B cell (primary cell): ENCODE measurements at regions of chr3 and their contacts with region 1.

Region 1: GRCh38 chr3:141412087-141412935 is 44.0 kb downstream of the ZBTB38 start:
- DNase-seq: peak; percentile 78
- ATAC-seq: peak; percentile 80
- H3K4me3 ChIP-seq: peak overlapping the region in 4 of 5 experiments; percentile 7 to 59 (median 39)
- H3K4me3 Mint-ChIP-seq: peak overlapping the region; percentile 85
- H3K27ac ChIP-seq: peak overlapping the region; percentile 64 to 86
- H3K27ac Mint-ChIP-seq: peak overlapping the region; percentile 96
- H3K4me1 ChIP-seq: peaks cover 21 to 22% of the 10 kb centered on the region in 2 donors
- H3K4me1 Mint-ChIP-seq: peaks cover 42% of the 10 kb centered on the region
- H3K27me3 ChIP-seq: no peaks in the 10 kb centered on the region
- H3K27me3 Mint-ChIP-seq: no peaks in the 10 kb centered on the region
- CTCF ChIP-seq: no peak

Region 2: GRCh38 chr3:141129541-141130011 is 282.7 kb before region 1 on chr3:
- CTCF ChIA-PET with region 1: no interaction called
- POLR2A ChIA-PET with region 1: no interaction called
- intact Hi-C with region 1: no loop called
- DNase-seq: no peak
- ATAC-seq: no peak
- H3K4me3 ChIP-seq: no peak overlapping the region
- H3K4me3 Mint-ChIP-seq: no peak overlapping the region
- H3K27ac ChIP-seq: no peak overlapping the region
- H3K27ac Mint-ChIP-seq: no peak overlapping the region
- H3K4me1 ChIP-seq: no peaks in the 10 kb centered on the region
- H3K4me1 Mint-ChIP-seq: no peaks in the 10 kb centered on the region
- H3K27me3 ChIP-seq: peaks cover 0 to 5% (median 0%) of the 10 kb centered on the region in 4 experiments
- H3K27me3 Mint-ChIP-seq: peaks cover 8% of the 10 kb centered on the region
- CTCF ChIP-seq: no peak

Region 3: DNA sequence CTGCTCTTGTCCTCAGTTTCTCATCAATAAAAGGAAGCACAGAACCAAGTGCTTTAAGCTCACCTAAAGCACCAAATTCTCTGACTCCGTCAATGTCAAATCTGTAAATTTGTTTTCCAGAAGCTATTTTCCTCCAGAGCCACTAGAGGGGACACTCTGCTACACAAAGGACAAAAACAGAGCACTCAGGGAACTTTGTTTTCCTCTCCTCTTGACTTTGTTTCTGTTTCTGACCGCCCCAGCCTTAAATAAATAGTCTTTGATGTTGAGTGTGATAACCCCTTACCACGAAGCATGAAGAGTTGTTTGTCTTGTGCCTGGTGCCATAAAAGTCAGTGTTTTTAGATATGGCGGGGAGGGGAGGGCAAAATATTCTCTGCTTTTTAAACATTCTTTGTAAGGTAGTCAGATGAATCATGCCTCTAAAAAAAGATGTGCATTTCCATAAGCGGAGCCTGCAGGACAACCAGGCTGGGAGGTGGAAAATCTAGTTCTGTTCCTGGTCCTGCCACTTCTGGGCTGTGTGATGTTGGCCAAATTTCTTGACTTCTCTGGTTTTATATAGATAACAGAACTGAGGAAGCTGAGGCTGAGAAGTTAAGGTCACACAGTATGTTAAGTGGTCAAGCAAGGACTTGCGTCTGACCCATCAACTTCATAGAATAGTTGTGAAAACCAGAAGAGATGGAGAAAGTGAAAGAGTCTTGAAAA is 51.3 kb before region 1 on chr3:
- CTCF ChIA-PET with region 1: interaction called, 11 read pairs
- POLR2A ChIA-PET with region 1: no interaction called
- intact Hi-C with region 1: no loop called
- DNase-seq: peak; percentile 54
- ATAC-seq: peak; percentile 65
- H3K4me3 ChIP-seq: no peak overlapping the region
- H3K4me3 Mint-ChIP-seq: peak overlapping the region; percentile 3
- H3K27ac ChIP-seq: no peak overlapping the region
- H3K27ac Mint-ChIP-seq: no peak overlapping the region
- H3K4me1 ChIP-seq: no peaks in the 10 kb centered on the region
- H3K4me1 Mint-ChIP-seq: no peaks in the 10 kb centered on the region
- H3K27me3 ChIP-seq: no peaks in the 10 kb centered on the region
- H3K27me3 Mint-ChIP-seq: no peaks in the 10 kb centered on the region
- CTCF ChIP-seq: peak; percentile 58

Region 4: GRCh38 chr3:141379250-141379966 is 32.9 kb before region 1 on chr3:
- CTCF ChIA-PET with region 1: no interaction called
- POLR2A ChIA-PET with region 1: interaction called, 3 read pairs
- intact Hi-C with region 1: loop called (anchors 5 kb)
- DNase-seq: peak; percentile 61
- ATAC-seq: peak; percentile 55
- H3K4me3 ChIP-seq: peak overlapping the region in 1 of 5 experiments; percentile 8
- H3K4me3 Mint-ChIP-seq: peak overlapping the region; percentile 80
- H3K27ac ChIP-seq: peak overlapping the region; percentile 74 to 76
- H3K27ac Mint-ChIP-seq: peak overlapping the region; percentile 97
- H3K4me1 ChIP-seq: peaks cover 11 to 45% of the 10 kb centered on the region in 2 donors
- H3K4me1 Mint-ChIP-seq: peaks cover 72% of the 10 kb centered on the region
- H3K27me3 ChIP-seq: no peaks in the 10 kb centered on the region
- H3K27me3 Mint-ChIP-seq: no peaks in the 10 kb centered on the region
- CTCF ChIP-seq: no peak

Region 5: GRCh38 chr3:141392897-141393734 is 19.2 kb before region 1 on chr3:
- CTCF ChIA-PET with region 1: no interaction called
- POLR2A ChIA-PET with region 1: no interaction called
- intact Hi-C with region 1: no loop called
- DNase-seq: no peak
- ATAC-seq: no peak
- H3K4me3 ChIP-seq: no peak overlapping the region
- H3K4me3 Mint-ChIP-seq: no peak overlapping the region
- H3K27ac ChIP-seq: no peak overlapping the region
- H3K27ac Mint-ChIP-seq: no peak overlapping the region
- H3K4me1 ChIP-seq: no peaks in the 10 kb centered on the region
- H3K4me1 Mint-ChIP-seq: peaks cover 16% of the 10 kb centered on the region
- H3K27me3 ChIP-seq: peaks cover 0 to 3% (median 0%) of the 10 kb centered on the region in 4 experiments
- H3K27me3 Mint-ChIP-seq: no peaks in the 10 kb centered on the region
- CTCF ChIP-seq: no peak